Spleen (tissue), 13 donors: ENCODE measurements at regions of chr3 and their contacts with region 1.

Region 1: GRCh38 chr3:44323341-44323955 is 15.1 kb upstream of the TCAIM start:
- DNase-seq: no peak
- H3K4me3 ChIP-seq: no peak overlapping the region
- H3K27ac ChIP-seq: no peak overlapping the region
- H3K4me1 ChIP-seq: peaks cover 0 to 7% (median 0%) of the 10 kb centered on the region in 6 donors
- H3K27me3 ChIP-seq: peaks cover 0 to 12% (median 0%) of the 10 kb centered on the region in 7 donors
- CTCF ChIP-seq: peak; percentile 25 to 78 (median 70)
- POLR2A ChIP-seq: no peak

Region 2: GRCh38 chr3:44099566-44100297 is 223.7 kb before region 1 on chr3:
- intact Hi-C with region 1: no loop called
- DNase-seq: no peak
- H3K4me3 ChIP-seq: no peak overlapping the region
- H3K27ac ChIP-seq: no peak overlapping the region
- H3K4me1 ChIP-seq: no peaks in the 10 kb centered on the region
- H3K27me3 ChIP-seq: peaks cover 0 to 44% (median 0%) of the 10 kb centered on the region in 7 donors
- CTCF ChIP-seq: no peak
- POLR2A ChIP-seq: no peak

Region 3: GRCh38 chr3:44510000-44510368 is 186.5 kb after region 1 on chr3:
- intact Hi-C with region 1: loop called (anchors 10 kb)
- DNase-seq: no peak
- H3K4me3 ChIP-seq: peak overlapping the region; percentile 71 to 98 (median 86)
- H3K27ac ChIP-seq: peak overlapping the region; percentile 84 to 94 (median 91)
- H3K4me1 ChIP-seq: peaks cover 12 to 46% (median 28%) of the 10 kb centered on the region in 6 donors
- H3K27me3 ChIP-seq: no peaks in the 10 kb centered on the region
- CTCF ChIP-seq: no peak
- POLR2A ChIP-seq: no peak